Activated CD4-positive, alpha-beta memory T cell treated with anti-CD3 and anti-CD28 coated beads for 36 hours (primary cell): ENCODE measurements at regions of chr3 and their contacts with region 1.

Region 1: GRCh38 chr3:39414421-39414907 is 7.9 kb downstream of the RPSA start:
- DNase-seq: no peak
- H3K4me3 Mint-ChIP-seq: no peak overlapping the region
- H3K27ac Mint-ChIP-seq: peak overlapping the region; percentile 3
- H3K4me1 Mint-ChIP-seq: peaks cover 27% of the 10 kb centered on the region
- H3K27me3 Mint-ChIP-seq: no peaks in the 10 kb centered on the region

Region 2: GRCh38 chr3:39383045-39383880 is 31.2 kb before region 1 on chr3 and contains the start of gene SLC25A38:
- CTCF ChIA-PET with region 1: interaction called, 3 read pairs
- POLR2A ChIA-PET with region 1: interaction called, 26 read pairs
- intact Hi-C with region 1: no loop called
- DNase-seq: peak; percentile 89
- H3K4me3 Mint-ChIP-seq: peak within 1 kb of the TSS; percentile 93
- H3K27ac Mint-ChIP-seq: peak within 1 kb of the TSS; percentile 97
- H3K4me1 Mint-ChIP-seq: peaks cover 36% of the 10 kb centered on the region
- H3K27me3 Mint-ChIP-seq: no peaks in the 10 kb centered on the region
- total RNA-seq, gene SLC25A38: 23.1 to 24.9 TPM